Activated CD8-positive, alpha-beta T cell treated with anti-CD3 and anti-CD28 coated beads, Interleukin-2, amount 10 ng/mL, durations not matched to agents 7 days and 5 days (primary cell): ENCODE measurements at regions of chr6 and their contacts with region 1.

Region 1: DNA sequence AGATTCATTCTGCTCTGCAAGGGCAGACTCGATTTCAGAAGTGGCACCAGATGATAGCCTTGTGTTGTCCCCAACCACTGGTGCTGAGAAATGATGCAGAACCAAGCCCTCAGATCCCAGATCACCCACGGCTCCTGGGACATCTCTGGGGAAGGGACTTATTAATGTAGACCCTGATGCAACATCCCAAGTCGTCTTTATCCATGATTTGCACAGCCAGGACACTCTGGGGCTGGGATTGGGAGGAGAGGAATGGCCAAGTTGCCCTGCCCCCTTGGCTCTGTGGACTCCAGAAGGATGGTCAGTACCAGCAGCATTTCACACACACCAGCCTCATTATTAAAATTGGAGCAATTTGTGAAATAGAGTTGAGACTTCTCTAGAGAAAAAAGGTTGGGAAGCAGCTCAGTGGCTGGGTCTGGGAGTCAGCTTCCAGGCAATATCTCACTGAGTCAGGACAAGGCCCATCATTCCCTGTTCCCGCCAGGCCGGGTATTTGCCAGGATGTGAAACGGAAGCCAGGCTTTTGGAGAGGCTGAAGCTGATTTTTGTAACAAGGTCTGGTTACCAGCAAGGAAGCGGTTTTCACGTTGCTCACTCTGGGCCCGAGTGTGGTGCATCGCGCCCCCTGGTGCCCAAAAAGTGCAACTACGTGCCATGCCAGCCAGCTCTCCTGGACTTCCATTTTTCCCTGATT is 67.4 kb downstream of the ZBTB2 start:
- DNase-seq: peak; percentile 79
- ATAC-seq: peak; percentile 62
- H3K4me3 Mint-ChIP-seq: no peak overlapping the region
- H3K27ac Mint-ChIP-seq: no peak overlapping the region
- H3K4me1 Mint-ChIP-seq: peaks cover 24% of the 10 kb centered on the region
- H3K27me3 Mint-ChIP-seq: peaks cover 53% of the 10 kb centered on the region

Region 2: DNA sequence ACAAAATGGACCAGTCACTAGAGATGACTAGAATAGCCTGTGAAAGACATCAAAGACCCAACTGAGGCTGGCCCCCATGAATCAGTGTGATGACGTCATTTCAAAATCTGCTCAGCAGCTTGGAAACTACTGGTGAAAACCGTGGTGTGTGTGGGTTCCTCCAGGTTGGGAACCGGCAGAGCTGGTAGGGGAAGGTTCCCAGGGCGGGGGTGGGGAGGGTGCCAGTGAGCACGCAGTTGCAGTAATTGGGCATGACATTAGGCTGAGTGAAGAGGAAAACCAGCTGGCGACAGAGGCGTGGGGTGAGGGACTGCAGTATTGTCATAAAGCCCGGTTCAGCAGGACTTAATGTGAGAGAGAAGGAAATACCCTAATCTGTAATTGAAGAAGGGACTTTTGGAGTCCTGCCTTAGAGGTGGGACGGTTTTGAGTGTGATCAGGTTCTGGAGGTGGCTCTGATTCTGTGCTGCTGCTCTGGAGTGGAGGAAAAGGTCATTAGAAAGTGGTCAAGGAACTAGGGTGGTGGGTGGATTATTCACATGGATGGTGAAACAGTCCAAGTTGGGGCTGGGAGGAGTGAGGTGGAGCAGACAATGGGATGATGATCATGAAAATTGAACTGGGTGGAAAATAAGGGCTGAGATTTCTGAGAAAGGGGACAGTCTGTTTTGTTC is 510.5 kb before region 1 on chr6:
- CTCF ChIA-PET with region 1: interaction called, 20 read pairs
- POLR2A ChIA-PET with region 1: no interaction called
- DNase-seq: no peak
- ATAC-seq: no peak
- H3K4me3 Mint-ChIP-seq: no peak overlapping the region
- H3K27ac Mint-ChIP-seq: no peak overlapping the region
- H3K4me1 Mint-ChIP-seq: peaks cover 6% of the 10 kb centered on the region
- H3K27me3 Mint-ChIP-seq: peaks cover 10% of the 10 kb centered on the region

Region 3: DNA sequence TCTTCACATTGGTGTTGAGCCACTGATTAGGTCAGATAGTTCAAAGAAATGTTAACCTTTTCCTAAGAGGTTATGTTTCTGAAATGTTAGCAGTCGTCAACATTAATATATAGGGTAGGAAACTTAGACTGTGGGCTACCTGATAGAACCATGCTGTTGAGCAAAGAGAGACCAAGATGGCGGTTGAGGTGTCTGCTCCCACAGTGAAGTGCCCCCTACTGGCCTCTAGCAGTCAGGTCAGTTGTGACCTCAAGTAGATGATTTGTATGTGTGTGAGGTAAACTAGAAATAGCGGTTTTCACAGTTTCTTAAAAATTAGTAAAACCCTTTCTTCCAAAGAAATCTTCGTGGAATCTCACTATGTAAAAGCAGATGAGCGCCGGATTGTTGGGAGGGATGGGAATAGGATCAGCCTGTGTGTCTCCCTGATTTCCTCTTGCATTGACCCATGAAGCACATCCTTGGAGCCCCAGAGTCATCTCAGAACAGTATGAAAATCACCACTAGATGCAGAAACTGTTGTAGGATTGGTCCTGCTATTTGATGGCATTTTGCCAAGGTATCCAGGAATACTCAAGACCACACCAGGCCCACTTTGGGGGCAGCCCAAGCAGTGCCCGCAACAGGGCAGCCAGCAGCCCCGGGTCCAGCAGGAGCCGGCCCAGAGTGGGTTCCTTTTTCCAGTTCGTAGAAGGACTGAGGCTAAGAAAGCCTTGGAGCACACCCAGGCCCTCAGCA is 418.0 kb before region 1 on chr6:
- CTCF ChIA-PET with region 1: interaction called, 12 read pairs
- POLR2A ChIA-PET with region 1: no interaction called
- DNase-seq: no peak
- ATAC-seq: no peak
- H3K4me3 Mint-ChIP-seq: no peak overlapping the region
- H3K27ac Mint-ChIP-seq: no peak overlapping the region
- H3K4me1 Mint-ChIP-seq: peaks cover 3% of the 10 kb centered on the region
- H3K27me3 Mint-ChIP-seq: no peaks in the 10 kb centered on the region

Region 4: GRCh38 chr6:150959166-150959565 is 364.8 kb before region 1 on chr6:
- CTCF ChIA-PET with region 1: interaction called, 10 read pairs
- POLR2A ChIA-PET with region 1: no interaction called
- DNase-seq: no peak
- ATAC-seq: no peak
- H3K4me3 Mint-ChIP-seq: no peak overlapping the region
- H3K27ac Mint-ChIP-seq: no peak overlapping the region
- H3K4me1 Mint-ChIP-seq: no peaks in the 10 kb centered on the region
- H3K27me3 Mint-ChIP-seq: no peaks in the 10 kb centered on the region

Region 5: GRCh38 chr6:151014404-151015100 is 309.4 kb before region 1 on chr6:
- CTCF ChIA-PET with region 1: interaction called, 211 read pairs
- POLR2A ChIA-PET with region 1: interaction called, 4 read pairs
- DNase-seq: peak; percentile 73
- ATAC-seq: peak; percentile 70
- H3K4me3 Mint-ChIP-seq: no peak overlapping the region
- H3K27ac Mint-ChIP-seq: no peak overlapping the region
- H3K4me1 Mint-ChIP-seq: peaks cover 2% of the 10 kb centered on the region
- H3K27me3 Mint-ChIP-seq: no peaks in the 10 kb centered on the region

Region 6: DNA sequence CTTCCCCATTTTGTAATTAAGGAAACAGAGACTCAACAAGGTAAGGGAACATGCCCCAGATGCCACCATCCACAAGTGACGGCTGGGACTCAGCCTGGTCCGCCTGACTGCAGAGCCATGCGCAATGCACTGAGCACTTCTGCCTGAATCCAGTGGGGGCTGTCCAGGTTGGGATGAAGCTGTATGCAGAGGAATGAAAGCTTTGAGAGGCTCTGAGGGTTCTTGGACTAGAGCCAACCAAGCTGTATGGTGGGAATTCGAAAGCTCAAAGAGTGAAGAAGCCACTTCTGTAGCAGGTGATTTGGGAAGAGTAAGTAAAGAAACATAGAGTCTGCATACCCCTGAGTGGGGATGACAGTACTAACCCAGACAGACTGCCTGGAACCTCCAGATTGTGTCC is 211.8 kb before region 1 on chr6:
- CTCF ChIA-PET with region 1: no interaction called
- POLR2A ChIA-PET with region 1: no interaction called
- DNase-seq: no peak
- ATAC-seq: no peak
- H3K4me3 Mint-ChIP-seq: no peak overlapping the region
- H3K27ac Mint-ChIP-seq: no peak overlapping the region
- H3K4me1 Mint-ChIP-seq: no peaks in the 10 kb centered on the region
- H3K27me3 Mint-ChIP-seq: peaks cover 10% of the 10 kb centered on the region

Region 7: DNA sequence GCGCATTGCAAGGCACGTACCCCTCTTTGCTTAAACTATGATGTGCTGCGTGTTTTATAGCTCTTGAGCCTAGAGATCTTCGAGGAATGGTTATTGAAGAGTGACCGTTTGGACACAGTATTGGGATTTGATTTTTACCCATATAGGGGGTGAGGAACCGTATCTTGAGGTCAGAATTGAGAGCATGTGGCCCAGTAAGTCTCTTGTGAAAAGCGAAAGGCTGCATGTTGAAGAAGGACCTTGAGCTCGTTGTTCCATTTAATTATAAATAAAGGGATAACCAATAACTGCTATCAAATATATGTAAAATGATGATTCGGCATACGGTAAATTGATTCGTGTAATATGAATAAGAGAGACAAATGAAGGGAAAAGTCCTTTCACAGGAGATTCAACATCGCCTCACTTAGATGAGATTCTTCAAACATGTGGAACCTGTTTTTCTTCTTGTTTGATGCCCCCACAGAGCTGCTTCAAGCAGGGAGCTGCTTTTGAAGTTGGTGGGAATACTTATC is 17.6 kb before region 1 on chr6:
- CTCF ChIA-PET with region 1: interaction called, 25 read pairs
- POLR2A ChIA-PET with region 1: no interaction called
- DNase-seq: no peak
- ATAC-seq: no peak
- H3K4me3 Mint-ChIP-seq: no peak overlapping the region
- H3K27ac Mint-ChIP-seq: no peak overlapping the region
- H3K4me1 Mint-ChIP-seq: no peaks in the 10 kb centered on the region
- H3K27me3 Mint-ChIP-seq: peaks cover 16% of the 10 kb centered on the region

Region 8: DNA sequence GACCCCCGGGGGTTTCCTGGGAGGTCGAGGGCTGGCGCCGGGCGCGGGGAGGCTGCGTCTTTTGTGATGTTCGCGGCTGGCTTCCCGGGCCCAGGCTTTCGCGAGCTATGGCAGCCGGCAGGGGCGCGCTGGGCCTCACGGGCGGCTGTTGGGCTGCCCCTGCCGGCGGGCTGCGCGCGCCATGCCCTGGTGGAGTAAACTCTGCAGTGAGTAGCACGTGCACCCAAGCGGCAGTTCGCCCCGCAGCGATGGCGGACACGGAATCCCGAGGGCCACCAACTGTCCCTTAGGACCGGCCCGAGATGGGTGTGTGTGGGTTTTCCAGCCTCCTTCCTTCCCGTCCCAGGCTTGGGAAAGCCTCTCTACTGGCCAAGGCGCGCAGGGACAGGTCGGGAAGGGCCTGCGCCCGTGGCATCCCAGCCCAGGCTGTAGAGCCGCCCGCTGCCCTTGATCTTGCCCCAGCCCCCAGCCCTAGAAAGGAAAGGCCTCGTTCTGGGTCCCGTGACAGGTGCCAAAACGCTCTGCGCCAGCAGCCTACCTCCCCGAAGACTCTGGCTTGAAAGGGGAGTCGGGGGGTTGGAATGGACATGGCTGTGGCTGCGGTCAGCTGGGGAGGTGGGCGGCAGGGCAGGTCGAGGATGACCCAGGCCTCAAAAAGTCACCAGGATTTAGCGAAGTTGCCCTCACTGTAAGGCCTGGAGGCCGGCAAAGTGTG is 17.7 kb after region 1 on chr6:
- CTCF ChIA-PET with region 1: interaction called, 73 read pairs
- POLR2A ChIA-PET with region 1: no interaction called
- DNase-seq: no peak
- ATAC-seq: no peak
- H3K4me3 Mint-ChIP-seq: no peak overlapping the region
- H3K27ac Mint-ChIP-seq: no peak overlapping the region
- H3K4me1 Mint-ChIP-seq: no peaks in the 10 kb centered on the region
- H3K27me3 Mint-ChIP-seq: peaks cover 5% of the 10 kb centered on the region

Region 9: DNA sequence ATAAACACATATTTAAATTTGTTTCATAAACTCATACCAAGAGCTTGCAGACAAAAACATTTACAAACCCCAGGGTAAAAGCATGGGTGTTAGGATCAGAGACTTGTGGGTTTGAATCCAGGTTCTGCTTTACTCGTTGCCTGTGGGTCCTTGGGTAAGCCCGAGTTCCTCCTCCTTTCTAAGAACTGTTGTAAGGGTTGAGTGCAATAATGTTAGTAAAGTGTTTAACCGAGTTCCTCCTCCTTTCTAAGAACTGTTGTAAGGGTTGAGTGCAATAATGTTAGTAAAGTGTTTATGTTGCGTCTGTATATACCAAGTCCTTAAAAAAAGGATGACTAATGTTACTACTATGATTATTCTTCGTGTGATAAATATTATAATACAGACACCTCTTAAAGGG is 188.5 kb after region 1 on chr6:
- CTCF ChIA-PET with region 1: no interaction called
- POLR2A ChIA-PET with region 1: no interaction called
- DNase-seq: no peak
- ATAC-seq: no peak
- H3K4me3 Mint-ChIP-seq: no peak overlapping the region
- H3K27ac Mint-ChIP-seq: no peak overlapping the region
- H3K4me1 Mint-ChIP-seq: no peaks in the 10 kb centered on the region
- H3K27me3 Mint-ChIP-seq: no peaks in the 10 kb centered on the region